Right cardiac atrium (tissue), 5 donors: ENCODE measurements at regions of chr17 and their contacts with region 1.

Region 1: DNA sequence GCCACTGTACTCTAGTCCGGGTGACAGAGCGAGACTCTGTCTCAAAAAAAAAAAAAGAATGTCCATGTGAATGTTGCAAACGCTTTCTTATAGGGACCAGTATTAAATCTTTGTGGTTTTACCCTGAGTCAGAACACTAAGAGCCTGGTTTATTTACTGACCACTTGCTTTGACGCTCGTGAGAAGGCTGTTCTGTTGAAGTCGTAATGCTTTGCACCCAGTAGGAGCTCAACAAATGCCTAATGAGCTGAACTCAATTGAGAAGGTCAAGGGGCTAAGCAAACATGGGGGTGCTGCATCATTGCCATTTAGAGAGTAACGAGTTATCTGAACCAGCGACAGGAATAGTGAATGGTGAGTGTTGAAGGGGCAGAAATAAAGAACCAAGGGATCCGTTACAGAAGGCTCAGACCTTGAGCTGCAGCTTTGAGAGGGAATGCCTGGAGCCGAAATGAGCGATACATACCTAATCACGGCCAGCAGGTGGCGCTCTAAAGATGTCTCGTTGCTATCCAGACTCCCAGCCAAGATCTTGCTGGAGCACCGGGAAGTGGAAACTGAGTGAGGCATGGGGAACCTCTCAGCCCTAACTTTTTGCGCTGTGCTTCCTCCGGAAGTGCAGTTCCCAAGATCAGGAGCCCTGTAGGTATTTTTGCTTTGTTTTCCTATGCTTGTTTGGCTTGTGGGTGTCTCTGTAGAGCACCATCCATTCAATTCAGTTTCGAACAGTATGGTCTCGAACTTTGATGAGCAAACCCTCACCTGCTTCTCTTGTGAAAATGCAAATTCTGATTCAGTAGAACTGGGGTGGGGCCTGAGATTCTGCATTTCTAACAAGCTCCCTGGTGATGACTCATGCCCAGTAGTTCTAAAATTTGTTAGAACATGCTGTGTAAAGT is 12.6 kb upstream of the RNF222 start:
- DNase-seq: peak; percentile 89 to 94 (median 93)
- ATAC-seq: peak; percentile 92 to 95
- H3K4me3 ChIP-seq: no peak overlapping the region
- H3K27ac ChIP-seq: no peak overlapping the region
- H3K4me1 ChIP-seq: no peaks in the 10 kb centered on the region
- H3K27me3 ChIP-seq: no peaks in the 10 kb centered on the region

Region 2: GRCh38 chr17:8753976-8754440 is 343.8 kb after region 1 on chr17:
- intact Hi-C with region 1: loop called in 3 of 4 experiments (anchors 5 to 10 kb)
- DNase-seq: no peak
- ATAC-seq: no peak
- H3K4me3 ChIP-seq: no peak overlapping the region
- H3K27ac ChIP-seq: no peak overlapping the region
- H3K4me1 ChIP-seq: no peaks in the 10 kb centered on the region
- H3K27me3 ChIP-seq: no peaks in the 10 kb centered on the region

Region 3: GRCh38 chr17:8785547-8786413 is 375.6 kb after region 1 on chr17:
- intact Hi-C with region 1: loop called (anchors 2 to 10 kb)
- DNase-seq: peak; percentile 74 to 93 (median 92)
- ATAC-seq: peak; percentile 90 to 91
- H3K4me3 ChIP-seq: no peak overlapping the region
- H3K27ac ChIP-seq: no peak overlapping the region
- H3K4me1 ChIP-seq: no peaks in the 10 kb centered on the region
- H3K27me3 ChIP-seq: no peaks in the 10 kb centered on the region